H1 (cell line): ENCODE measurements at regions of chr12 and their contacts with region 1.

Region 1: GRCh38 chr12:56158029-56158925 is at the start of gene MYL6:
- DNase-seq: peak; percentile 88 to 91
- H3K4me3 ChIP-seq: peak within 1 kb of the TSS; percentile 63 to 97 (median 93)
- H3K27ac ChIP-seq: peak within 1 kb of the TSS; percentile 99
- H3K4me1 ChIP-seq: peaks cover 8 to 37% (median 22%) of the 10 kb centered on the region in 4 experiments
- H3K27me3 ChIP-seq: no peaks in the 10 kb centered on the region
- CTCF ChIP-seq: no peak
- EP300 ChIP-seq: peak in 1 of 2 experiments; percentile 75; a peak in 2 of 3 replicates
- POLR2A ChIP-seq: peak; percentile 98
- RAD21 ChIP-seq: no peak
- total RNA-seq, gene MYL6: 1,130 and 1,137 TPM in 2 replicates

Region 2: GRCh38 chr12:55681142-55682077 is 476.9 kb before region 1 on chr12:
- CTCF ChIA-PET with region 1: no interaction called
- POLR2A ChIA-PET with region 1: no interaction called
- DNase-seq: peak; percentile 61 to 83
- H3K4me3 ChIP-seq: peak overlapping the region in 3 of 4 experiments; percentile 6 to 44 (median 21); a peak in 5 of 8 replicates
- H3K27ac ChIP-seq: no peak overlapping the region
- H3K4me1 ChIP-seq: peaks cover 0 to 12% (median 5%) of the 10 kb centered on the region in 4 experiments; a peak in 4 of 7 replicates
- H3K27me3 ChIP-seq: no peaks in the 10 kb centered on the region
- CTCF ChIP-seq: peak; percentile 60 to 68 (median 61)
- EP300 ChIP-seq: no peak
- POLR2A ChIP-seq: peak in 1 of 2 experiments; percentile 54; a peak in 2 of 3 replicates
- RAD21 ChIP-seq: peak; percentile 25 to 48; a peak in 3 of 4 replicates

Region 3: GRCh38 chr12:55983229-55983842 is 174.9 kb before region 1 on chr12:
- CTCF ChIA-PET with region 1: no interaction called
- POLR2A ChIA-PET with region 1: no interaction called
- DNase-seq: no peak
- H3K4me3 ChIP-seq: no peak overlapping the region
- H3K27ac ChIP-seq: no peak overlapping the region
- H3K4me1 ChIP-seq: no peaks in the 10 kb centered on the region
- H3K27me3 ChIP-seq: no peaks in the 10 kb centered on the region
- CTCF ChIP-seq: no peak
- EP300 ChIP-seq: no peak
- POLR2A ChIP-seq: no peak
- RAD21 ChIP-seq: no peak

Region 4: GRCh38 chr12:56104109-56104814 is 54.0 kb before region 1 on chr12 and contains the start of gene PA2G4:
- CTCF ChIA-PET with region 1: no interaction called
- POLR2A ChIA-PET with region 1: interaction called, 29 read pairs
- DNase-seq: peak; percentile 95 to 99
- H3K4me3 ChIP-seq: peak within 1 kb of the TSS; percentile 81 to 95 (median 92)
- H3K27ac ChIP-seq: peak within 1 kb of the TSS; percentile 88; the same call in 1 of the 2 replicates
- H3K4me1 ChIP-seq: peaks cover 0 to 9% (median 3%) of the 10 kb centered on the region in 4 experiments; a peak in 5 of 7 replicates
- H3K27me3 ChIP-seq: no peaks in the 10 kb centered on the region
- CTCF ChIP-seq: no peak
- EP300 ChIP-seq: no peak
- POLR2A ChIP-seq: peak; percentile 69 to 70; a peak in 2 of 3 replicates
- RAD21 ChIP-seq: no peak
- total RNA-seq, gene PA2G4: 237 and 242 TPM in 2 replicates

Region 5: GRCh38 chr12:56178347-56178746 is 20.1 kb after region 1 on chr12:
- CTCF ChIA-PET with region 1: interaction called, 15 read pairs
- POLR2A ChIA-PET with region 1: interaction called, 656 read pairs
- DNase-seq: no peak
- H3K4me3 ChIP-seq: no peak overlapping the region
- H3K27ac ChIP-seq: no peak overlapping the region
- H3K4me1 ChIP-seq: no peaks in the 10 kb centered on the region
- H3K27me3 ChIP-seq: no peaks in the 10 kb centered on the region
- CTCF ChIP-seq: no peak
- EP300 ChIP-seq: no peak
- POLR2A ChIP-seq: no peak; a peak in 1 of 3 replicates
- RAD21 ChIP-seq: no peak

Region 6: DNA sequence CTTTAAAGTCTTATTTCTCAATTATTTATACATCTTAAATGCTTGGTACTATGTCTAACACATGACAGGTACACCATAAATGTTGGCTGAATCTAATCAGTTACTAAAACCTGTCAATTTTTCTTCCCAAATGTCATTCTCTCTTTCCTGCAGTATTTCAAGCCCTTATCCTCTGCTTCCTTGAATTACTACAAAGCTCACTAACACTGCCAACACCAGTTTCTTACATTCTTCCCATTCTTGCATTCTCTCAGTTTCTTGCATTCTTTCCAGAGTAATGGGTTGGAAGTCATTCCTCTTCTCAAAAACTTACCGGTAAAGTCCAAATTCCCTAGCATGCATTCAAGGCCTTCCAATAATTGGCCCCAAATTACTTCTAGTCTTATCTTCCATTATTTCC is 40.6 kb after region 1 on chr12:
- CTCF ChIA-PET with region 1: interaction called, 3 read pairs
- POLR2A ChIA-PET with region 1: interaction called, 55 read pairs
- DNase-seq: no peak
- H3K4me3 ChIP-seq: no peak overlapping the region
- H3K27ac ChIP-seq: no peak overlapping the region
- H3K4me1 ChIP-seq: no peaks in the 10 kb centered on the region
- H3K27me3 ChIP-seq: no peaks in the 10 kb centered on the region
- CTCF ChIP-seq: no peak
- EP300 ChIP-seq: no peak
- POLR2A ChIP-seq: no peak
- RAD21 ChIP-seq: no peak

Region 7: GRCh38 chr12:56230432-56231183 is 72.3 kb after region 1 on chr12:
- CTCF ChIA-PET with region 1: interaction called, 4 read pairs
- POLR2A ChIA-PET with region 1: interaction called, 65 read pairs
- DNase-seq: no peak
- H3K4me3 ChIP-seq: no peak overlapping the region
- H3K27ac ChIP-seq: no peak overlapping the region
- H3K4me1 ChIP-seq: peaks cover 0 to 6% (median 0%) of the 10 kb centered on the region in 4 experiments; a peak in 3 of 7 replicates
- H3K27me3 ChIP-seq: no peaks in the 10 kb centered on the region
- CTCF ChIP-seq: no peak
- EP300 ChIP-seq: no peak
- POLR2A ChIP-seq: no peak
- RAD21 ChIP-seq: no peak